Upper lobe of right lung (tissue), 1 donor: ENCODE measurements at regions of chr6 and their contacts with region 1.

Region 1: GRCh38 chr6:14059791-14060444 is 57.7 kb upstream of the CD83 start:
- DNase-seq: no peak
- ATAC-seq: peak; percentile 20
- H3K4me3 ChIP-seq: no peak overlapping the region
- H3K27ac ChIP-seq: no peak overlapping the region
- H3K4me1 ChIP-seq: no peaks in the 10 kb centered on the region
- H3K27me3 ChIP-seq: peaks cover 6% of the 10 kb centered on the region
- CTCF ChIP-seq: no peak

Region 2: GRCh38 chr6:13916230-13916944 is 143.5 kb before region 1 on chr6:
- intact Hi-C with region 1: loop called (anchors 10 kb)
- DNase-seq: no peak
- ATAC-seq: peak; percentile 16
- H3K4me3 ChIP-seq: no peak overlapping the region
- H3K27ac ChIP-seq: peak overlapping the region; percentile 39
- H3K4me1 ChIP-seq: peaks cover 10% of the 10 kb centered on the region
- H3K27me3 ChIP-seq: no peaks in the 10 kb centered on the region
- CTCF ChIP-seq: no peak